ENCODE measurements at regions of chr14 and their contacts with region 1.

Region 1: DNA sequence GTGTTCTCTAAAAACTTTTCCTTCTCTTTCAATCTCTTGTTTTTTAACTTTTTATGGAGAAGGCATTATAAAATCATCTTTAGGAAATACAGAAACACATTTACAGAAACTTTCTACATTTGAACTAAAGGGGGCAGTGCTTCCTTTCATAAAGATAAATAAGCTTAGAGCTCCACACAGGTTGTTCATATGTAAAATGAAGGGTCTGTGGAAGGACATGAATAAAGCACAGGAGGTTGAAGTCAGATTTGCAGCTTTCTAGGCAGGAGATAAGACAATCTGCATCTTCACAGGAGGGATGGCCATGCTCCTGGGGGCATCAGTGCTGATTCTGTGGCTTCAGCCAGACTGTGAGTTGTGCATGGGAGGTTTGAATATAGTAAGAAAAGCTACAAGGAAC is 426.0 kb downstream of the DAD1 start:
- DNase-seq: peak; percentile 46 to 66 (median 60)
- H3K4me3 ChIP-seq: no peak overlapping the region
- H3K27ac ChIP-seq: no peak overlapping the region
- H3K4me1 ChIP-seq: peaks cover 12 to 26% (median 16%) of the 10 kb centered on the region in 4 experiments
- H3K27me3 ChIP-seq: peaks cover 0 to 13% (median 3%) of the 10 kb centered on the region in 5 experiments

Region 2: GRCh38 chr14:22200977-22201605 is 38.0 kb after region 1 on chr14:
- CTCF ChIA-PET with region 1: interaction called, 37 read pairs
- POLR2A ChIA-PET with region 1: no interaction called
- DNase-seq: peak; percentile 81 to 88 (median 88)
- H3K4me3 ChIP-seq: no peak overlapping the region
- H3K27ac ChIP-seq: no peak overlapping the region
- H3K4me1 ChIP-seq: no peaks in the 10 kb centered on the region
- H3K27me3 ChIP-seq: no peaks in the 10 kb centered on the region

Region 3: DNA sequence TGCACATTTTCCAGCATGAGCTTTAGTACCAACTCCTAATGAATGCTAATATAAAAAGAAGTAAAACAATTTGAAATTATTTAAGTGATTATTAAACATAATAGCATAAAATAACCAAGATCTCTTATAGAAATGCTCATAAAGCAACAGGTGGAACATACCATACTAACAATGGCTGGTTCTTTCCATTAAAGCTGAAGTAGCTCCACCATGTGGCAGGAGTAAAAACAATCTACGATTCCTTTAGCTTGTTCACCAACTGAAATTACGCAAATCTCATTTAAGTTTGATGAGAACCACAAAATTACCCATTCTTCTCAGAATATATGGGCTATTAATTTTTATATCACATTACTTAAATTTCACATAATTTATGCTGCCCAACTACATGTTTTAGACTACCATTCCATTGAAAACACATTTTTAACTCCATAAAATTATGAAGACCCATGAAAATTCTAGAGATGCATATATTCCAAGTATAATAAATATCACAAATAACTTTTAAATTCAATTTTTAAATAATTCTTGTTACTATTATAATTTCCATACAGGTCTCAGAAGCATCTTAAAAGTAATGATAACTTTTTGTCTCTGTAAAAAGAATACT is 212.4 kb after region 1 on chr14:
- CTCF ChIA-PET with region 1: interaction called, 13 read pairs
- POLR2A ChIA-PET with region 1: no interaction called
- DNase-seq: peak; percentile 61 to 84 (median 82)
- H3K4me3 ChIP-seq: no peak overlapping the region
- H3K27ac ChIP-seq: no peak overlapping the region
- H3K4me1 ChIP-seq: no peaks in the 10 kb centered on the region
- H3K27me3 ChIP-seq: peaks cover 0 to 2% (median 0%) of the 10 kb centered on the region in 5 experiments

Measured in common myeloid progenitor, CD34-positive (primary cell).